AG04449 (cell line): ENCODE measurements at regions of chr16 and their contacts with region 1.

Region 1: DNA sequence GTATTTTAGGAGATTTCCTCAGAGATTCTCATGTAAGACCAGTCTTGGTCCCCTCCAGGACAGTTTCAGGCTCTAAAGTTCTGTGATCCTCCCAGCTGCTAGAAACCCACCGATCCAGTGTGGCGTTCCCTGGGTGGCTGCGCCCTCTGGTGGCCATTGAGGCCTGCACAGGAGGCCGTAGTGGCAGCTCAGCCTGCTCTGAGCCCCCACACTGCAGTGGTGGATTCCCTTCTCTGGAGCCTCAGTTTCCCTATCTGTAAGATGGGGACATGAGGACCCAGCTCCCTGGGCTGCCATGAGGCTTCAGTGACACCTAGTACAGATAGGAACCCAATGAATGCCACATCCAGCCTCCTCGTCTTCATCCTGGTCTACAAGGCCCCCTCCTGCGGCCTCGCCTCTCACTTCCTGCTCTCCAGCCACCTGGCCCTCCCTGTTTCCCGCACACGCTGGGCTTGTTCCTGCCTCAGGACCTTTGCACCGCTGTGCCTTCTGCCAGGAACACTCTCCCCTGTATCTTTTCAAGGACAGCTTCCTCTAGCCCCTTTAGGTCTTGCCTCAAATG is 16.5 kb downstream of the CCDC102A start:
- DNase-seq: no peak
- H3K4me3 ChIP-seq: no peak overlapping the region
- CTCF ChIP-seq: peak; percentile 95

Region 2: DNA sequence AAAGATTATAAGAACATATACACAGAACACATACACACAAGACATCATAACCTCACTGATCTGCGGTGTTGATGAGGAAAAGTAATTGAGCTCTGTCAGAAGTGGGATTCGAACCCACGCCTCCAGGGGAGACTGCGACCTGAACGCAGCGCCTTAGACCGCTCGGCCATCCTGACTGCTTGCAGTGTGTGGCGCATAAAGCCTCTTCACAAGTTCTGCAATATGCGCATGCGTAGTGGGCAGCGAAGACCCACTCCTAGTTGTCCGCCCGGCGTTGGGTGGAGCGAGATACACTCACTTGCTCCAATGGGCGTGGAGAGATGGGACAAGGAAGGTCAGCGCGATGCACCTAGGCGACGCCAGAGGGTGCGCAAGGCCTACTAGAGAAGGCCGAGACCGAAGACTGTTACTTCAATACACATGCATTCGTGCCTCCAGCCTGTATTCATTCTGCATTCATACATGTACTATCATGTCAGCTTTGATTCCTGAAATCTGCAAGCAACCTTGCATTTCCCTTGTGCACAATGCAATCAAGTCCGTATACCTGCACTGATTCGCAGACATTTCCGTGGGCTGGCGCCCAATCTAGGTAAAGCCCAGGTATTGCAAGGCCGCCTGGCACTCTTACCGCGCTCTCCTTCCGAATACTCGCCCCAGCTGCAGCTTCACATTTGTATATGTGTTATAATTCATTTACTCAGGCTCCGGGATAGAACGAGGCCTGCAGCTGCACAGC is 219.3 kb before region 1 on chr16:
- CTCF ChIA-PET with region 1: interaction called, 32 read pairs
- POLR2A ChIA-PET with region 1: no interaction called
- DNase-seq: peak; percentile 90
- H3K4me3 ChIP-seq: peak overlapping the region; percentile 64
- CTCF ChIP-seq: peak; percentile 95

Region 3: GRCh38 chr16:57394444-57394843 is 125.4 kb before region 1 on chr16:
- CTCF ChIA-PET with region 1: no interaction called
- POLR2A ChIA-PET with region 1: no interaction called
- DNase-seq: no peak
- H3K4me3 ChIP-seq: no peak overlapping the region
- CTCF ChIP-seq: no peak

Region 4: DNA sequence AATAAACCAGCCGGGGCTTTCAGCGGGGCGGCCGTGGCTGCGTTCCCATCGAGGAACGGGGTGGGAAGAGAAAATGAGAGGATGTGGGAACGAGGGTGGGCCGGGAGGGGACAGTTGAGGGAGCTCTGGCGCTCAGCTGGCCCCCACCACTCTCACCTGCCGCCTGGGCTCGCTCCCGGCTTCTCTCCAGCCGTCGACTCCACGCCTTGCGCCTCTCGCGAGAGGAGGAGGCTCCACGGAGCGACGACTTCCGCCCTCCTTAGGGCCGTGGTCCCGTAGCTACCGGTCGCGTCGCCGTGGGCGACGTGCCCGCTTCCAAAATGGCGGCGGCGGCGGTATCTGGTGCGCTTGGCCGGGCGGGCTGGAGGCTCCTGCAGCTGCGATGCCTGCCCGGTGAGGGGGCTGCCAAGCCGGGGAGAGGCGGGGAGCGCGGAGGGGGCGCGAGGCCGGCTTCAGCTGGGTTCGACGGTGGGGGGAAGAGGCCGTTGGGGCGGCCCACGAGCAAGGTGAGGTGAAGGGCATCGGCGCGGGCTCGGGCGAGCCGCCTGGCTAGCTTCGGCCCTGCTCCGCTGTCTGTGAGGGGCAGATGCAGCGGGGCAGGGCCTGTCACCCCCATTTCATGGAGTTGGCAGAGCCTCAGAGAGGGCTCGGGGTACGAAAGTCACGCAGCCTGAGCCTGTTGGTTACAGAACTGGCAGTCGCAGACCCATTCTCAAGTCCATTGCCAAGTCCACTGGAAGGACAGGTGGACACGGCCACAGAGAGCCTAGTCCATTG is 72.5 kb before region 1 on chr16 and contains the starts of genes CIAPIN1 and COQ9:
- CTCF ChIA-PET with region 1: interaction called, 21 read pairs
- POLR2A ChIA-PET with region 1: no interaction called
- DNase-seq: peak; percentile 33
- H3K4me3 ChIP-seq: peak within 1 kb of the TSS; percentile 84
- CTCF ChIP-seq: no peak

Region 5: DNA sequence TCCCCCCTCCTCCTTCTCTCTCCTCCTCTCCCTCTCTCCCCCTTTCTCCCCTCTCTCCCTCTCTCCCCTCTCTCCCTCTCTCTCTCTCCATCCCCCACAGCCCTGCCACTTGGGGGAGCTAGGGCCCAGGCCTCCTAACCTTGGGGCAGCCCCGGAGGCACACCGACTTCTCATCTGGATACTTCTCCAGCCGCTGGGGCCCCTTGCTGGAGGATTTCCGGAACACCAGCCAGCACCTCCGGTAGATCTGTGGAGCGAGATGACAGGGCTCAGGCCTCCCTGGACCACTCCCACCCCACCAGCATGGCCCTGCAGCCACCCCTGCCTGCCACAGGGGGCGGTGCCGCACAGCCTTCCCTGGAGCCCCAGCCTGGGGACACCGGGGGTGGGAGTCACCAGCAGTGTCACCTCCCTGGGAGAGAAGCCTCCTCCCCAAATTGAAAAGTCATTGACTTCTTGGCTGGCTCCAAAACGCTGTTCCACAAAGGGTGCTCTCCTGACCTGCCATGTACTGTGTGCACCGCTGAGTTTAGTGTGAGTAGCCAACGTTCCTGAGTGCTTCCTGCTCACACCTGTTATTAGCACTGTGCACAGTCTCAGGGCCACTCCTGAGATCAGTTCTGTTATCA is 44.1 kb before region 1 on chr16:
- CTCF ChIA-PET with region 1: interaction called, 103 read pairs
- POLR2A ChIA-PET with region 1: no interaction called
- DNase-seq: no peak
- H3K4me3 ChIP-seq: no peak overlapping the region
- CTCF ChIP-seq: peak; percentile 79

Region 6: DNA sequence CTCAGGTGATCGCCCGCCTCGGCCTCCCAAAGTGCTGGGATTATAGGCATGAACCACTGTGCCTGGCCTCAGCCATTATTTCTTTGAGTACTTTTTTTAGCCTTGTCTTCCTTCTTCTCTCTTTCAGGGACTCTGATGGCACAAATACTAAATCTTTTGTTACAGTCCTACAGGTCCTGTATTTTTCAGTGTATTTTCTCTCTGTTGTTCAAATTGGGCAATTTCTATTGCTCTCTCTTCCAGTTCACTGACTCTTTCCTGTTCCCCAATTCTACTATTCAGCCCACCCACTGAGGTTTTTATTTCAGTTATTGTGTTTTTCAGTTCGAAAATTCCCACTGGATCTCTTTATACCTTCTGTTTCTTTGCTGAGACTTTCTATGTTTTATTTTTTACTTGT is 26.1 kb before region 1 on chr16:
- CTCF ChIA-PET with region 1: interaction called, 103 read pairs
- POLR2A ChIA-PET with region 1: no interaction called
- DNase-seq: no peak
- H3K4me3 ChIP-seq: no peak overlapping the region
- CTCF ChIP-seq: no peak

Region 7: GRCh38 chr16:57530104-57530521 is 10.2 kb after region 1 on chr16:
- CTCF ChIA-PET with region 1: interaction called, 48 read pairs
- POLR2A ChIA-PET with region 1: no interaction called
- DNase-seq: no peak
- H3K4me3 ChIP-seq: no peak overlapping the region
- CTCF ChIP-seq: no peak

Region 8: DNA sequence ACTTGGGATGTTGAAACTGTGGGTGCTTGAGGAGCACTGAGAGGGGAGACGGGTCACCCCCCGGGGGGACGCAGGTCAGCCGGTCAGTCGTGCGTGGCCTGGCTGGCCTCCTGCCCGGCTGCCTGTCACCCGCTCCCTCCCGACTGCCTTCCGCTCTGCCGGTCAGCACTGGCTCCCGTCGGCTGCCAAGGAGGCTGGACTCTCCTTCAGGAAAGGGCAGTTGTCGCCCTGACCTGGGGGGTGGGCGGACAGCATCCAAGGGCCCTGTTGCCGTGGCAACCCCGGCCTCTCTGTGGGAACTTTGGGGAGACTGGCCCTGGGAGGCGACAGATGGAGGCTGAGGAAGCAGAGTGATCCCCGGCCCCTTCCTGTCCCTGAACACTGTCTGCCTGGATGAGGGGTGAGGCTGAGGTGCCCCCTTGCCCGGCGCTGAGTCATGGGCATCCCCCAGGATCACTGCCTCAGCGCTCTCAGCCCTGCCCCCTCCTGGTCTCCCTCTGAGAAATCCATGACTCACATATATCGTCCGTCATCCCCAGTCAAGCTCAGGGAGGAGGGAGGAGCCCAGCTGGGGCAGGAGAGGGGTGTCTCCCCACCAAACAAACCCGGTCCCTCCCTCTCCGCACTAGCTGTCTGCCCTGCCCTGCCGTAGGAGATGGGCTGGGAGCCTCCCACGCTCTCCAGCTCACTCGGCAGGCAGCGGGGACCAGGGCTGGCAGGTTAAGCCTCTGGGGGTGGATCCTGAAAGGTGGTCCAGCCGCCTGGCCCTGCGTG is 108.3 kb after region 1 on chr16 and contains the start of gene ADGRG1:
- CTCF ChIA-PET with region 1: no interaction called
- POLR2A ChIA-PET with region 1: no interaction called
- DNase-seq: peak; percentile 71
- H3K4me3 ChIP-seq: peak within 1 kb of the TSS; percentile 54
- CTCF ChIP-seq: peak; percentile 16